ENCODE measurements at regions of chr3 and their contacts with region 1.

Region 1: GRCh38 chr3:157606011-157606851 is 103.0 kb upstream of the VEPH1 start:
- DNase-seq: peak; percentile 51
- CTCF ChIP-seq: peak; percentile 85

Region 2: DNA sequence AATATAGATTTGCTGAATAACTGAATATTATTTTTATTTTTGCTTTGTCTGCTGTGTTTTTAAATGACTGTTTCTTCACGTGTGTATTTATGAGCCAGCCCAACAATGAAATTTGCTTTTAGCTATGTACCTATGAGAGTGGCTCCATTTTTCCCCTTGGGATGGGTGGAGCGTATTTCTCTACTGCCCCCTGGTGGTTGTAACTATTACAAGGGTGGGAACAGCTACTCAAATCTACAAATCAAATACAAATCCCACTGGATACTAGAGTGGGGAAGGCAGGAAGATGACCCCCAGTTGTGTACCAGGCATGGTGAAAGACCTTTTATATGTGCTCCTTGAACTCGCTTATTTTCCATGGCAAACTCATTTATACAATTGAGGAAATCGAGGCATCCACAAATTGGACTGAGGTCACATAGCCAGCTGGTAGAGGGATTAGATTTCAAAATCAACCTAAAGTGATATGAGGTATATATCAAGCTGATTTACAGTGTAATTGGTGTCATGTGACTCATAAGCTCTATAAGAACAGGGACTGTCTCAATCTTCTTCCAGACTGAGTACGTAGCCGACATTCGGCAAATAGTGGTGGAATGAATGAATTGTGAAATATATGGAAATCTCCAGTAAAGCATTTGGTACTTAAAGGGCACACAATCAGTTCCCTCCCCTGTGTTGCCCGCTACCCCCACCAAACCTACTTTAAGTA is 33.5 kb before region 1 on chr3:
- CTCF ChIA-PET with region 1: interaction called, 16 read pairs
- POLR2A ChIA-PET with region 1: no interaction called
- DNase-seq: peak; percentile 48
- CTCF ChIP-seq: peak; percentile 60

Region 3: GRCh38 chr3:157589211-157589610 is 17.0 kb before region 1 on chr3:
- CTCF ChIA-PET with region 1: interaction called, 29 read pairs
- POLR2A ChIA-PET with region 1: no interaction called
- DNase-seq: no peak
- CTCF ChIP-seq: no peak

Region 4: GRCh38 chr3:157618075-157618760 is 12.0 kb after region 1 on chr3:
- CTCF ChIA-PET with region 1: interaction called, 36 read pairs
- POLR2A ChIA-PET with region 1: interaction called, 4 read pairs
- DNase-seq: peak; percentile 53
- CTCF ChIP-seq: peak; percentile 61

Region 5: DNA sequence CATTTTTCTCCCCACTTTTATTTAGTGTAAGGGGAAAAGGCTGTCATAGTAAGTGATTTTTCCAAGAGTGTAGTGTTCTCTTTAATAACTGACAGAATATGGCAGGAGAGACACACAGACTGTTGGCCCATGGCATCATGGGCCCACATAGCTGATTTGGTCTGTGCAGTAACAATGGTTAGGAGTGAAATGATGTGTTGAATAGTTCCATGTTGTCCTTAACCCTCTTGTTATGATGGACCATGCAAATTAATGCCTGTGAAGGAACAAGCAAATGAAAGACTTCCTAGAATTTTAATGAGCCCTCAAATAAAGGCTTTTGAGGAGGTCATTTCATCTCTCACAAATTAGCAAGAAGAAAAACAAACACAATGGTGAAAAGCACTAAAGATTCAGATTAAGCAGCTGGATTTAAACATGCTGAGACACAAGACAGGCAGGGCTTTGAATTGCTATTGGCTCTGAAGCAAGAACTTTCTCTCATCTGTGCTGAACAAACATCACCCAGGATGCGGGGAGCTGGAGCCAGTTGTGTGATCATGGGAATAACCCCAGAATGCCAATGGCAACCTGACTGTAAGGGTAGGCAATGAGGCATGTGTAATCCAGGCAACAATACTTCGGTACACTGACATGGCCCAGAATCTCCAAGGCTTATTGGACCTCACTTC is 33.7 kb after region 1 on chr3:
- CTCF ChIA-PET with region 1: interaction called, 10 read pairs
- POLR2A ChIA-PET with region 1: no interaction called
- DNase-seq: no peak
- CTCF ChIP-seq: no peak

Measured in GM10248 (cell line).